ENCODE measurements at regions of chr4 and their contacts with region 1.

Region 1: DNA sequence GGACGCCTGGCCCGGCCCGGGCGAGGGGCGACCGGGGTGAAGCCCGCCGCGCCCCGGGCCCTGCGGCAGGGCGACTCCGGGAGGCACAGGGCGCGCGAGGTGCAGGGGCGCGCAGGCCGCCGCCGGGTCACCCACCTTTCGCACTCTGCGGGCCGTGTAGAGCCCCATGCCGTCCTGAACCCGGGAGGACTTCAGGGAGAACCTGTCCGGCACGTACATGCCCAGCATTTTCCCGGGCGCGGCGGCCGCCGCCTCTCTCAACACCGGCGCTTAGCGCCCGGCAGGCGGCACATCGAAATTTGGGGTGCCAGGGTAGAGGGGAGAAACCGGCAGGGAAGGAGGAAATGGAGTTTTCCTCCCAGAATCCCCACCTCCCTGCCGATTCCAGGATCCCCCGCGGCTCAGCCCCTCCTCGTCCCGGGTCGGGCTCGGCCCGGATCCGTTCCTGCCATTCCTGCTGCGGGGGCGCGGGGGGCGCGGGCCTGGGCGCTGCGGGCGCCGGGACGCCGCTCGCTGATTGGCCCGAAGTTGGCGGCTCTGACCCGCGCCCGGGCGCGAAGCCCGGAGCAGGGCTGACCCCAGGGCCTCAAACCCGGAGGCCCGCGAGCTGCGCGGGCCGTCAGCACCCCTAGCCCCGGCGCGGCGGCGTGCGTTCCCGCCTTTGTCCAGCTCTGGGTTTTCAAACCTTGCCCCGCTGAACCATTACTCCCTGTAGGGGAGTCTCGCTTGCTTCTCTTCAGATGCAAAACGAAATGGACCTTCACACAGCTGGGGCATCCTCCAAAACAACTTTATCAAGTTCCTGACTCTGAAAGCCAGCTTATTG is at the start of gene PRDM5:
- DNase-seq: peak in 1 of 2 donors; percentile 13
- ATAC-seq: peak; percentile 50 to 54
- H3K4me3 ChIP-seq: peak within 1 kb of the TSS; percentile 69 to 82 (median 74)
- H3K27ac ChIP-seq: peak within 1 kb of the TSS; percentile 65 to 79 (median 78)
- H3K4me1 ChIP-seq: peaks cover 6 to 22% of the 10 kb centered on the region in 2 donors
- H3K27me3 ChIP-seq: no peaks in the 10 kb centered on the region
- CTCF ChIP-seq: peak in 1 of 5 experiments; percentile 15
- POLR2A ChIP-seq: peak in 1 of 2 donors; percentile 1
- total RNA-seq, gene PRDM5: 1.3 to 2.3 (median 1.6) TPM

Region 2: DNA sequence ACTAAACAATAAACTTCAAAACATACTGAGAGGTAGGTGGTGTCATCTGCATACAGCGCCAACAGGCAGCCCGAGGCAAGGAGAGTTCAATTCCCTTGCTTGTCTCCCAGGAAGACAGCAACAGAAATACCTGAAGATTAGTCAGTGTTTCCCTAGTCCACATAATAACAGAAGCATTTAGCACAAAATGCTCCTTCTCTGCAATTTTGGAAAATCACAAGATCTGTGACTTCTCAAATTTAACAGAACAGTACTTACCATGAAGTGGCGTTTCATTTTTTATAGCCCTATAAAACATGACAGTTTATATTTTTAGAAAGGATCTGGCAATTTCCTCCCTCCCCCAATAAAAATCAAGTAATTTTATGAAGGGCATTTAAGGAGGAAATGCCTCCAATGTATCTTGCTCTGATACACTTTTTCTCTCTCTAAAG is 1854.0 kb before region 1 on chr4:
- in situ Hi-C with region 1: no loop called
- intact Hi-C with region 1: loop called (anchors 10 kb)
- DNase-seq: no peak
- ATAC-seq: no peak
- H3K4me3 ChIP-seq: no peak overlapping the region
- H3K27ac ChIP-seq: no peak overlapping the region
- H3K4me1 ChIP-seq: no peaks in the 10 kb centered on the region
- H3K27me3 ChIP-seq: no peaks in the 10 kb centered on the region
- CTCF ChIP-seq: no peak
- POLR2A ChIP-seq: no peak

Region 3: GRCh38 chr4:121072224-121073003 is 149.8 kb after region 1 on chr4 and contains the start of gene NDNF:
- in situ Hi-C with region 1: no loop called
- intact Hi-C with region 1: loop called (anchors 10 kb)
- DNase-seq: no peak
- ATAC-seq: peak; percentile 16 to 50
- H3K4me3 ChIP-seq: peak within 1 kb of the TSS; percentile 51 to 66 (median 64)
- H3K27ac ChIP-seq: peak within 1 kb of the TSS; percentile 37 to 75 (median 65)
- H3K4me1 ChIP-seq: peaks cover 0 to 12% of the 10 kb centered on the region in 2 donors
- H3K27me3 ChIP-seq: peaks cover 11% of the 10 kb centered on the region in 3 donors
- CTCF ChIP-seq: no peak
- POLR2A ChIP-seq: peak in 1 of 2 donors; percentile 34
- total RNA-seq, gene NDNF: 2.6 to 8.1 (median 4.5) TPM